Activated CD4-positive, alpha-beta T cell treated with anti-CD3 and anti-CD28 coated beads for 36 hours (primary cell): ENCODE measurements at regions of chr19 and their contacts with region 1.

Region 1: DNA sequence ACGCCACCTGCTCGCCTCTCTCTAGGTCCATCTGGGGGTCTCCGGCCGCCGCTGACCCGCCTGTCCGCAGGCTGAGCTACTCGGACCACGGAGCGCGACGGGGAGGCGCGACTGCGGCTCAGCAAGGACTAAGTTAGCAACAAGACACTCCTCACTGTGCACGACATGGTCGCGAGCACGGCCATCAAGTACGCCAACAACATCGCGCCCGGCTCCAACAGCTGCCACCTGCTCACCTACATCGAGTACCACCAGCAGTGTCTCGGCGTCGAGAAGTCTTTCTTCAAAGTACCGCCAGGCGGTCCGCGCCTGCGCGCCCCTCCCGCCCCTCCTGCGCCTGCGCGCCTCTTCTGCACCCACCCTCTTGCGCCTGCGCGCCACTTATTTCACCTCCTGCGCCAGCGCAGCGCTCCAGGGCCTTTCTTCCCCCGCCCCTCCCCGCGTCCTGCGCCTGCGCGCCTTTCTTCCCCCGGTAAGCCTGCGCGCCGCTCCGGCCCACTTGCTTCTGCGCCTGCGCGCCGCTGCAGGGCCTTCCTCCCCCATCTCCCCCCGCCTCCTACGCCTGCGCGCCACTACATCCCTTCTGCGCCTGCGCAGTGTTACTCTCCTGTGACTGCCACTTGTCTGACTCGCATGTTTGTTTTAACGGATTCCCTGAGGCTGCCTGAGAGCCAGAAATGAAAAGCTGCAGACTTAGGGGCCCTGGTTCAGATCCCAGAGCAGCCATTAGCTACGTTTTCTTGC is 63.9 kb downstream of the ACSBG2 start:
- DNase-seq: peak; percentile 100
- ATAC-seq: peak; percentile 95
- H3K4me3 Mint-ChIP-seq: peak overlapping the region; percentile 100
- H3K27ac Mint-ChIP-seq: peak overlapping the region; percentile 92
- H3K4me1 Mint-ChIP-seq: peaks cover 12% of the 10 kb centered on the region
- H3K27me3 Mint-ChIP-seq: no peaks in the 10 kb centered on the region

Region 2: GRCh38 chr19:6161271-6161850 is 38.1 kb before region 1 on chr19:
- CTCF ChIA-PET with region 1: interaction called, 3 read pairs
- POLR2A ChIA-PET with region 1: no interaction called
- intact Hi-C with region 1: loop called in 1 of 2 experiments (anchors 1 kb)
- DNase-seq: peak; percentile 71
- ATAC-seq: peak; percentile 85
- H3K4me3 Mint-ChIP-seq: no peak overlapping the region
- H3K27ac Mint-ChIP-seq: no peak overlapping the region
- H3K4me1 Mint-ChIP-seq: peaks cover 7% of the 10 kb centered on the region
- H3K27me3 Mint-ChIP-seq: no peaks in the 10 kb centered on the region

Region 3: GRCh38 chr19:6212403-6213265 is 13.2 kb after region 1 on chr19:
- CTCF ChIA-PET with region 1: no interaction called
- POLR2A ChIA-PET with region 1: no interaction called
- intact Hi-C with region 1: no loop called
- DNase-seq: no peak
- ATAC-seq: no peak
- H3K4me3 Mint-ChIP-seq: no peak overlapping the region
- H3K27ac Mint-ChIP-seq: no peak overlapping the region
- H3K4me1 Mint-ChIP-seq: no peaks in the 10 kb centered on the region
- H3K27me3 Mint-ChIP-seq: no peaks in the 10 kb centered on the region

Region 4: DNA sequence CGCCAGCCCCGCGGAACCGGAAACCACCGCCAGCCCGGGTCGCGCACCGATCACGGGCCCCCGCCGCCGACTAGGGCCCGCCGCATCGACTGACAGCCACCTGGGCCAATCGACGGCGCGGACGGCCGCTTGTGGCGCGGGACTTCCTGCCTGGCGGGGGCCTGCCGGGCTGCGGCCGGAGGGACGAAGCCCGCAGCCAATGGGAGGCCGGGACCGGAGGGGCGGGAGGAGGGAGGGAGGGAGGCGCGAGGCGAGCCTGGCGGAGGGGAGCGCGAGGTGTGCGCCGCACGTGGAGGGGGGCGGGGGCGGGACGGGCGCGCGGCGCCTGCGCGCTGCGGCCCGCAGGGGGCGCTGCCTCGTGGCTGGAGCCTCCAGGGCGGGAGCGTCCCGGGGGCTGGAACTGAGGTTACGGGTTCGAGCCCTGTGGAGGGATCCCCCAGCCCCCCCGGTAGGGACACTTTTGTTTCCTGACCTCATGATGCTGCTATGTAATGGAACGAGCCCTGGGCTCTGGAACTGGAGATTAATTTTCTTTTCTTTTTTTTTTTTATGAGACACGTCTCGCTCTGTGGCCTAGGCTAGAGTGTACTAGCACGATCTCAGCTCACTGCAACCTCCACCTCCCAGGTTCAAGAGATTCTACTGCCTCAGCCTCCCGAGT is 80.6 kb after region 1 on chr19 and contains the start of gene MLLT1:
- CTCF ChIA-PET with region 1: no interaction called
- POLR2A ChIA-PET with region 1: no interaction called
- intact Hi-C with region 1: loop called in 1 of 2 experiments (anchors 1 kb)
- DNase-seq: peak; percentile 98
- ATAC-seq: peak; percentile 98
- H3K4me3 Mint-ChIP-seq: peak within 1 kb of the TSS; percentile 98
- H3K27ac Mint-ChIP-seq: peak within 1 kb of the TSS; percentile 93
- H3K4me1 Mint-ChIP-seq: peaks cover 38% of the 10 kb centered on the region
- H3K27me3 Mint-ChIP-seq: peaks cover 2% of the 10 kb centered on the region
- total RNA-seq, gene MLLT1: 45.0 to 46.6 TPM

Region 5: DNA sequence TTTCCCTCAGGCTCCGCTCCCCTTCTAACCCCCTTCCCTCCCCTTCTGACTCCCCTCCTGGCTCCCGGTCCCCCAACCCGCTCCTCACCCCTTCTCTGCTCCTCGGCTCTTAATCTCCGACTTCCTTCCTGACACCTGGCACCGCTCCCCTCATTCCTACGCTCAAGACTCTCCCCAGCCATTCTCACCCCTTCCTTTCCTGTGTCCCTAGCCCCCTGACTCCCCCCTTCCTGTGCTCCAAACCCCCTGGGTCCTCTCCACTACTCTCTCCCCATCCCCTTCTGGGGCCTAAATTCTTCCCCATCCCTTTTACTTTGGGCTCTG is 162.6 kb after region 1 on chr19:
- CTCF ChIA-PET with region 1: no interaction called
- POLR2A ChIA-PET with region 1: no interaction called
- intact Hi-C with region 1: loop called (anchors 1 kb)
- DNase-seq: no peak
- ATAC-seq: peak; percentile 1
- H3K4me3 Mint-ChIP-seq: peak overlapping the region; percentile 85
- H3K27ac Mint-ChIP-seq: peak overlapping the region; percentile 91
- H3K4me1 Mint-ChIP-seq: peaks cover 16% of the 10 kb centered on the region
- H3K27me3 Mint-ChIP-seq: no peaks in the 10 kb centered on the region